ENCODE measurements at regions of chr12 and their contacts with region 1.

Region 1: DNA sequence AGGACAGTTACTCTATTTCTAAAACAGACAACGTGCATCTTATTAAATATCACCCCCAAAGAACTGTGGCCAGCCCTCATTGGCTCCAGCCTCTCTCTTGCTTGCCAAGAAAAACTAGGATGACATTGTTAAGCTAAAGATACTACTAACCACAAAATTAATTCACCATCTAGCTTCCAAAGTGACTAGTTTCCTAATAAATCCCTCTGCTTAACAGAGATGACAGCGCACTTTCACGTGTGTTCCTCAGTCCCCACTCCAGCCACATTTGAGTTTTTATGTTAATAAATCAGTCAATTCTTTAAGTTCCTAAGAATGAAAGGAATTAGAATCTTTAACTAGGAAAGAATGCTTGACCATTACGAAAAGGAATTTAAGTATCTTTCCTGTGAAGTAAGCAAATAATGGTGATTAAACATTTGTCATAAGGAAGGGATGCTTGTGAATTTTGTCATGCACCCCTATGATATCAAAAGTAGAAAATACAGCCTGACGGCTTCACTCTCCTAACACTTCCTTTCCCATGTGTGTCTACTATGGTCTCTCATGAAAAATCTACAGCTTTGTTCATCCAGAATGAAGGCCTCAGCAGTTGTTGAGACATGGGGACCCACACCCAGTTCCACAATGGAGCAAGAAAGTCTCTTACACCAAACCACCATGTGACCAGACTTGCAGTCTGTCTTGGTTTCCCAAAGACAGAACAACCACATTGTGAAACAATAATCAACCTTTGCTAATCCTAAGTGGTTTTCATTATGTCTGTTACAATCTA is 8.1 kb downstream of the CORO1C start:
- DNase-seq: peak; percentile 7
- ATAC-seq: peak; percentile 54
- H3K4me3 Mint-ChIP-seq: no peak overlapping the region
- H3K27ac Mint-ChIP-seq: no peak overlapping the region
- H3K4me1 Mint-ChIP-seq: peaks cover 39% of the 10 kb centered on the region
- H3K27me3 Mint-ChIP-seq: no peaks in the 10 kb centered on the region

Region 2: GRCh38 chr12:108701779-108702441 is 21.3 kb before region 1 on chr12:
- CTCF ChIA-PET with region 1: no interaction called
- POLR2A ChIA-PET with region 1: interaction called, 5 read pairs
- intact Hi-C with region 1: loop called in 1 of 2 experiments (anchors 2 kb)
- DNase-seq: peak; percentile 39
- ATAC-seq: peak; percentile 98
- H3K4me3 Mint-ChIP-seq: no peak overlapping the region
- H3K27ac Mint-ChIP-seq: no peak overlapping the region
- H3K4me1 Mint-ChIP-seq: peaks cover 28% of the 10 kb centered on the region
- H3K27me3 Mint-ChIP-seq: no peaks in the 10 kb centered on the region